Panc1 (cell line): ENCODE measurements at regions of chr1 and their contacts with region 1.

Region 1: GRCh38 chr1:51285055-51285454 is 45.3 kb downstream of the TTC39A start:
- DNase-seq: no peak
- ATAC-seq: no peak
- H3K4me3 ChIP-seq: no peak overlapping the region
- H3K27ac ChIP-seq: no peak overlapping the region
- H3K4me1 ChIP-seq: no peaks in the 10 kb centered on the region
- H3K27me3 ChIP-seq: no peaks in the 10 kb centered on the region
- CTCF ChIP-seq: no peak

Region 2: GRCh38 chr1:51265618-51266017 is 19.4 kb before region 1 on chr1:
- CTCF ChIA-PET with region 1: no interaction called
- POLR2A ChIA-PET with region 1: no interaction called
- in situ Hi-C with region 1: no loop called
- intact Hi-C with region 1: no loop called
- DNase-seq: no peak
- ATAC-seq: no peak
- H3K4me3 ChIP-seq: no peak overlapping the region
- H3K27ac ChIP-seq: no peak overlapping the region
- H3K4me1 ChIP-seq: peaks cover 16% of the 10 kb centered on the region
- H3K27me3 ChIP-seq: no peaks in the 10 kb centered on the region
- CTCF ChIP-seq: no peak

Region 3: DNA sequence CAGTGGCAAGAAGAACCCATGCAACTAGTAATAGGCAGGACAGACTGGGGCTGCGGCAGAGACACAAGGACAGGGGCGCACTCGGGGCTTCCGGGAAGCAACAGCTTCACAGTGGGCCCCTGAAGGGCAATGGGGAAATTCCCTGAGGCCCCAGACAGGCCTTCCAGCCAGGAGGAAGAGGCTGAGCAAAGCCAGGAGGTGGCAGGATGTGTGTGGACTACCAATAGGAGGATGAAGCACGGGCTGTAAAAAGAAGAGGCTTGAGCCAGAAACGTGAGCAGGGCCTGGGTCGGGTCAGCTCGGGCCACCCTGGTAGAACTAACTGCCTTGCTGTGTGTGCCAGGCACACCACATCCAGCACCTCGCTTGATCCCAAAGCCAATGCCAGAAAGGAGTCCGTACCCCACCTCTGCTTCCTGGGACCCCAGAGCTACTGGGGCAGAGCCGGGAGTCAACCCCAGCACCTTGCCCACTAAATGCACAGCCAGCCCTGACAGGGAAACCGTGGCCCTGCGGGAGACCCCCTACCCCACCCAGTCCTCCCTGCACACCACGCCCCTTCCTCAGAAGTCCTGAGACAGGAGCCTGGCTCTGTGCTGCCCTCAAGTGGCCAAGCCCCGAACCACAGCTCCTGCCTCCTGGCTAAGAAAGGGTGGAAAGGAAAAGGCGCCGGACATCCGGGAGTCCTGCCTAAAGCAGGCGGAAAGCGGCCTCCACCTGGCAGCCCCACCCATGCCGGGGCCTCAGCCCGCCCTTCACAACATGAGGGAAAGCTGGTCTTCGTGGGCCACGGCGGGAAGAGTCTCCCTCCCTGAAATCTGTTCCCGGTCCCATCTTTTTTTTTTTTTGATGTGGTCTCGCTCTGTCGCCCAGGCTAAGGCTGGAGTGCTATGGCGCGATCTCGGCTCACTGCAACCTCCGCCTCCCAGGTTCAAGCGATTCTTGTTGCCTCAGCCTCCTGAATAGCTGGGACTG is 11.6 kb after region 1 on chr1:
- CTCF ChIA-PET with region 1: interaction called, 13 read pairs
- POLR2A ChIA-PET with region 1: no interaction called
- in situ Hi-C with region 1: no loop called
- intact Hi-C with region 1: no loop called
- DNase-seq: peak; percentile 75
- ATAC-seq: peak; percentile 88
- H3K4me3 ChIP-seq: peak overlapping the region; percentile 27 to 50
- H3K27ac ChIP-seq: peak overlapping the region; percentile 70
- H3K4me1 ChIP-seq: peaks cover 12% of the 10 kb centered on the region; the same call in 1 of the 2 replicates
- H3K27me3 ChIP-seq: no peaks in the 10 kb centered on the region
- CTCF ChIP-seq: peak; percentile 98

Region 4: DNA sequence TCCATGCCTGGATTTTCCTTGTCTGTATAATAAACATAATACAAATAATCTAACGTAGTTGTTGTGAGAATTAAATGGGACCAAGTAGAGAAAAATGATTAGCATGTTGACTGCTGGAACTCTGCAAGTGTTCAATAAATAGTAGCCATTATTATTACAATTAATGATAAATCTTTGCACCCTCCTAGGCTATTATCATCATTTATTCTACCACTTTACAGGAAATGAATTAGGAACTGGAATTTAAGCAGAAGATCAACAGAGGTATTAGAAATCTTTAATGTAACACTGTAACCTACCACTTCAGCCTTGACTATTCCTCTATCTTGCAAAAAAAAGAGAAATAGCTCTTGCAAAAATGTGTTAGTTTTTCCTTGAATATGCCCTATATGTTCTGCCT is 107.2 kb after region 1 on chr1:
- CTCF ChIA-PET with region 1: no interaction called
- POLR2A ChIA-PET with region 1: interaction called, 13 read pairs
- in situ Hi-C with region 1: no loop called
- intact Hi-C with region 1: no loop called
- DNase-seq: no peak
- ATAC-seq: no peak
- H3K4me3 ChIP-seq: no peak overlapping the region
- H3K27ac ChIP-seq: no peak overlapping the region
- H3K4me1 ChIP-seq: no peaks in the 10 kb centered on the region
- H3K27me3 ChIP-seq: no peaks in the 10 kb centered on the region
- CTCF ChIP-seq: no peak